Activated CD4-positive, alpha-beta memory T cell treated with anti-CD3 and anti-CD28 coated beads, Interleukin-2, amount 10 ng/mL, durations not matched to agents 7 days and 5 days (primary cell): ENCODE measurements at regions of chr3 and their contacts with region 1.

Region 1: GRCh38 chr3:196942226-196942914 is at the start of gene NCBP2:
- DNase-seq: peak; percentile 100
- H3K4me3 Mint-ChIP-seq: peak within 1 kb of the TSS; percentile 90
- H3K27ac Mint-ChIP-seq: peak within 1 kb of the TSS; percentile 98
- H3K4me1 Mint-ChIP-seq: peaks cover 58% of the 10 kb centered on the region
- H3K27me3 Mint-ChIP-seq: no peaks in the 10 kb centered on the region
- total RNA-seq, gene NCBP2: 54.6 to 55.6 TPM

Region 2: DNA sequence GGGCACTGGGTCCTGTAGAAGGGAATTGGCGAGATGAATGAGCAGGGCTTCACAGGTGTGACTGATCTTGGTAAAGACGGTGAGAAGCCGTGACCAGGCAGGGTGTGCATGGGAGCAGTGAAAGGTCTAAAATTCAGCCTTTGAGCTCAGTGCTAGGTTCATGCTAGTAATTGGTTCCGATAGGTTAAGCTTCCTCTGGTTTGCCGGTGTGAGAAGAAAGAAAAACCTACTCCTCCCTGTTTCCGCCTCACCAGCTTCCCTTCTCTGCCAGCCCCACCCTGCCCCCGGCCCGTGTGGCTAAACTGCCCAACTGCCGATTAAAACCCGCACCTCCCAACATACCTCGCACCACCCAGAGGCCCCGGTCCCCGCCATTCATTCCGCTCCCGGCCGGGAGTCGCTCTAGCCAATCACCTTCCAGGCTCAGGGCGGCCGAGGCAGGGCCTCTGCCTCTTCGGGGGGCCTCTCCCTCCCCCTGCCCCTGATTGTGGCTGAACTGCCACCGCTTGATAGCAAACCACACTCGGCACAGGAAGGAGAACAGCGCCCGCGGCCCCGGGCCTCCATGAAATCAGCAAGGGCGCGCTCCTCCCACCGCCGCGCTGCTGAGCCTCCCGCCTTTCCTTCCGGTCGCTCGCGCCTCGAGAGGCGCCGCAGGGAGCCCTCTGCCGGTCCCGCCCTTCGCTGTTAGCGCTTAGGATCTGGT is 310.2 kb before region 1 on chr3:
- CTCF ChIA-PET with region 1: interaction called, 5 read pairs
- POLR2A ChIA-PET with region 1: interaction called, 11 read pairs
- DNase-seq: peak; percentile 97
- H3K4me3 Mint-ChIP-seq: peak overlapping the region; percentile 97
- H3K27ac Mint-ChIP-seq: peak overlapping the region; percentile 98
- H3K4me1 Mint-ChIP-seq: peaks cover 65% of the 10 kb centered on the region
- H3K27me3 Mint-ChIP-seq: no peaks in the 10 kb centered on the region

Region 3: DNA sequence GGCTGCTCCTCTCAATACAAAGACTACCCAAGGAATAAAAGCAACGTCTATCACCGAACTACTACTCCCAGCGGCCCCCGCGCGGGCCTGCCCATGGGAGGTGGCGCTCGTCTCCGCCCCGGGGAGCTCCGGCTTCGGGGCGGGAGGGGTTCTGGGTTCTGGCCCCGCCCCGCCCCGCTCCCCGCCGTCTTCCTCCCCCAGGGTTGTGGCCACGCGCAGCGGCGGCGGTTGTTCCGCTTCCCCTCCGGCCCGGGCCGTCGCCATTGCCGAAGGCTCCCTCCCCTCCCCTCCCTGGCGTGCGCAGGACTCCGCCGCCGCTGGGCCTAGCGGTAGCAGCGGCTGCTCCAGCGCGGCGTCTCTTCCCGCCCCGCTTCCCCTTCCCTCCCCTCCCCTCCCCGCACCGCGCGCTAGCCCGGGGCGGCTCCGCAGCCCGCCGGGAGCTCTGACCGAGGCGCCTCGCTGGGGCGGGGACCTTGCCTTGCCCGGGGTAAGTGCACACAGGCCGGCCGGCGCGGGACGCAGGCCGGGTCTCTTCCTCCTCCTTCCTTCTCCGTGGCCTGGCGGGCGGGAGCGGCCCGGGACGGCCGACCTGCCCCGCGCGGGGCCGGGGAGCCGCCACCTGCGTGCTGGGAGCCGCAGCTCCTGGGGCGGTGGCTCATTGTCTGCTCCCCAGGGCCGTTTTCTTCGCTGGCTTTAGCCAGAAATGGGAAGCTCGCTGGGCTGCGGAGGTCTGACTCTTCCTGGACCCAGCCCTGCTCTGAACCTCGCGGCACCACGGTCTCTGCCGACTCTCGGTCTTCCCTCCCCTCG is 202.5 kb before region 1 on chr3 and contains the start of gene PAK2:
- CTCF ChIA-PET with region 1: no interaction called
- POLR2A ChIA-PET with region 1: interaction called, 16 read pairs
- DNase-seq: peak; percentile 91
- H3K4me3 Mint-ChIP-seq: peak within 1 kb of the TSS; percentile 99
- H3K27ac Mint-ChIP-seq: peak within 1 kb of the TSS; percentile 98
- H3K4me1 Mint-ChIP-seq: peaks cover 28% of the 10 kb centered on the region
- H3K27me3 Mint-ChIP-seq: no peaks in the 10 kb centered on the region
- total RNA-seq, gene PAK2: 118 to 119 TPM

Region 4: DNA sequence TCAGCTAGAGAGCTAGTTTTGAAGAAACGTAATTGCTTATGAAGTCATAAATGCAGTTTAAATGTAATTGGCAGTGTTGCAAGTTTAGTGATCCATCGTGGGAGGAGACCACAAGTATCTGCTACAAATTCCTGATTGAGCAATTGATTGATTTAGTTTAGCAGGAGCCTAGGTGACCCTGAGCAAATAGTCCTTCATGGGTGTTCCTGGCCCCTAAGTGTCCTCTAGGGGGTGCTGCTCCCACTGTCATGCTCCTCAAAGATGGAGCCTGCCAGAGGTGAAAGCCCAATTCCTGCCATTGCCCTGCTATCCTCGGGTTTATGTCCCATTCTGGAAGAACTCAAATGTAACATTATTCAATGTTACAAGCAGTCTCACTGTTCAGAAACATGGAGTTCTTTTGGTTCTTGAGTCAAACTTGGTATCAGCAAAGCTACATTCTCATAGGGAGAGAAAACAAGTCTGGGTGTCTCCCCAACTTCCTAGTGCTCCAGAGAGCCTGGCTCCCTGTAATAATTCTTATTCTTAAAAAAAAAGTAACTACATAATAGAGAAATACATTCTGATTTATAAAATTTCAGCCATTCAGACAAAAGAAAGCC is 104.5 kb before region 1 on chr3:
- CTCF ChIA-PET with region 1: interaction called, 11 read pairs
- POLR2A ChIA-PET with region 1: interaction called, 11 read pairs
- DNase-seq: peak; percentile 77
- H3K4me3 Mint-ChIP-seq: no peak overlapping the region
- H3K27ac Mint-ChIP-seq: no peak overlapping the region
- H3K4me1 Mint-ChIP-seq: peaks cover 9% of the 10 kb centered on the region
- H3K27me3 Mint-ChIP-seq: no peaks in the 10 kb centered on the region

Region 5: DNA sequence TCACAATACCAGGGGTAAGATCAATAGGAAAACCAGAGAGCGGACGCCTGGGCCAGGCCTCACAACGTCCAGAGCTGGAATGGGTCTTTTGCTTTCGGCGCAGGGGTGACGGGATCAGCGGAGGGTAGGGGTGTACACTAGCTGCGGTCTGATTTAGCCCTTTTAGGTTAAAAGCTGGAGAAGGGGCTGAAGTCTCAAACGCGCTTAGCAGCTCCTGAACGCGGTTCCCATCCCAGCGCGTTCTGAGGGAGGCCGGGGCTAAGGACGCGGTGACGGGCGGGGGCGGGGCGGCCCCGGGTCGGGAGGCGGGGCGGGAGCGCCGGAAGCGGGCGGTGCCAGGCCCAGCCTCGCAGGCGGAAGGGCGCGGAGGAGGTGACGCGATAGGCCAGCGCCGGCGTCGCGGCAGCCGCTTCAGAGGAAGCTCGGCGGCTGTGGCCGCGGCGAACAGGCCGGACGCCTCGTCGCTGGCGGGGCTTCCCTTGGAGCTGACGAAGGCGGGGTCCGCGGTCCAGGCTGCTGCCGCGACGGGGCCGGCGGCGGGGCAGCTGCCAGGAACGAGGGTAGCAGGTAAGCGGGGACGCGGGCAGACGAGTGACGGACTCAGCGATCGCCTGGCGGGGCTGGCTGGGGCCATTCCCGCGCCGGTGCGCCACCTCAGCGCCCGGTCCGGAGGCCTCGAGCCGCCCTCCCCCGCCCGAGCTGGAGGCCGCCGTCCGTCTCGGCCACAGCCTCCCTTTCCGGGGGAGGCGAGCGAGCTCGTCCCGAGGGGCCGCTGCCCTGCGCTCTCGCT is 74.7 kb before region 1 on chr3 and contains the start of gene SENP5:
- CTCF ChIA-PET with region 1: interaction called, 19 read pairs
- POLR2A ChIA-PET with region 1: interaction called, 91 read pairs
- DNase-seq: peak; percentile 93
- H3K4me3 Mint-ChIP-seq: peak within 1 kb of the TSS; percentile 93
- H3K27ac Mint-ChIP-seq: peak within 1 kb of the TSS; percentile 91
- H3K4me1 Mint-ChIP-seq: peaks cover 24% of the 10 kb centered on the region
- H3K27me3 Mint-ChIP-seq: no peaks in the 10 kb centered on the region
- total RNA-seq, gene SENP5: 37.9 to 42.3 TPM

Region 6: DNA sequence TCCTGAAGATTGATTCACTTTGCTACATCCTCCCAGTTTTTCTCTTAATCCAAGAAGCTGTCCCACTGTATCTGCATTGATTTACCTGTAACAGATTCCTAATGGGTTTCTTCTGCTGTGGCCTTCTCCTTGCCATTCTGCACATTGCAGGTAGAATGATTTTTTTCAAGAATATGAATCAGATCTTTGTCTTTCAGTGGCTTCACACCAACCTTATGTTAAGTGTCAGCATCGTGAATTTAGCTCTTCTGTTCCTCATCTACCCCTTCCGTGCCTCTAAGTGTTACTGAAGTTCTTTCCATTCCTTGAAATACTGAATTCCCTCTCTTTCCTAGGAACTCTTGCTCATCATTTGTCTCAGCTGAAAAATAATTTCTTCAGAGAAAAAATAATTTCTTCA is 67.1 kb before region 1 on chr3:
- CTCF ChIA-PET with region 1: no interaction called
- POLR2A ChIA-PET with region 1: interaction called, 91 read pairs
- DNase-seq: no peak
- H3K4me3 Mint-ChIP-seq: no peak overlapping the region
- H3K27ac Mint-ChIP-seq: no peak overlapping the region
- H3K4me1 Mint-ChIP-seq: peaks cover 15% of the 10 kb centered on the region
- H3K27me3 Mint-ChIP-seq: no peaks in the 10 kb centered on the region

Region 7: GRCh38 chr3:196889844-196890708 is 52.3 kb before region 1 on chr3:
- CTCF ChIA-PET with region 1: no interaction called
- POLR2A ChIA-PET with region 1: no interaction called
- DNase-seq: no peak
- H3K4me3 Mint-ChIP-seq: no peak overlapping the region
- H3K27ac Mint-ChIP-seq: no peak overlapping the region
- H3K4me1 Mint-ChIP-seq: peaks cover 16% of the 10 kb centered on the region
- H3K27me3 Mint-ChIP-seq: no peaks in the 10 kb centered on the region

Region 8: GRCh38 chr3:196914866-196915265 is 27.5 kb before region 1 on chr3:
- CTCF ChIA-PET with region 1: no interaction called
- POLR2A ChIA-PET with region 1: no interaction called
- DNase-seq: no peak
- H3K4me3 Mint-ChIP-seq: no peak overlapping the region
- H3K27ac Mint-ChIP-seq: no peak overlapping the region
- H3K4me1 Mint-ChIP-seq: no peaks in the 10 kb centered on the region
- H3K27me3 Mint-ChIP-seq: no peaks in the 10 kb centered on the region

Region 9: DNA sequence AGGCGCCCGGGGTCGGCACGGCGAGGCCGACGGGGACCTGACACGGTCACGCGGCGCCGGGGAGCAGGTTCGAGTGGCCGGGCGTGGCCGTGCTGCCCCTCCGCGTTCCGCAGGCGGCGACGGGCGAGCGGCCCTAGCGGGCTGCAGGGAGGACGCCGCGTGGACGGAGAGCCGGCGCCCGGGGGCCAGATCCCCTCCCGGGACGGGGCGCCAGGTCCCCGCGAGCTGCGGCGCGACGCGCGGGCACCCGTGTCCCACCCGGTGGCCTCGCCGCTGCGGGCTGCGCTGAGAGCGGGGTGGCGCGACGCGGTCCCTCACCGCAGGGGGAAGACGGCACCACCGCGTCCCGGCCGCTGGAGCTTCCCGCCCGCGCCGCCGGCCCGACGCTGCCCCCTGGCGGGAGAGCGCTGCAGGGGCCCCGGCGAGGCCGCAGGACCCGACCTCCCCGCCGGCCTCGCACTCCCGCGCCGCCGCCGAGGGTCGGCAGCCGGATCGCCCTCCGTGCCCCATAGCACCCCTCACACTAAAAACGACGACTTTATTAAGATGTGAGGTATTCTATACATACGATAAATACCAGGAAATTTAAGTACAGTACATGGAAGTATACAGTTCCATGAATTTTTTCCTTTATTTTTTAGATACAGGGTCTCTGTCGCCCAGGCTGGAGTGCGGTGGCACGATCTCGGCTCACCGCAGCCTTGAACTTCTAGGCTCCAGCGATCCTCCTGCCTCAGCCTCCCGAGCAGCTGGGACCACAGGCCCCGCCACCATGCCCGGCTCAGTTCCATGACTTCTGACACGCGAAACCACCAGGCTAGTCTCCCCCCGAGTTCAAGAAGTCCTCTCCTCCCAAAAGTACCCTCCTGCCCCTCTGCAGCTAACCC is 27.5 kb after region 1 on chr3:
- CTCF ChIA-PET with region 1: interaction called, 3 read pairs
- POLR2A ChIA-PET with region 1: interaction called, 32 read pairs
- DNase-seq: peak; percentile 73
- H3K4me3 Mint-ChIP-seq: peak overlapping the region; percentile 58
- H3K27ac Mint-ChIP-seq: peak overlapping the region; percentile 49
- H3K4me1 Mint-ChIP-seq: peaks cover 12% of the 10 kb centered on the region
- H3K27me3 Mint-ChIP-seq: peaks cover 11% of the 10 kb centered on the region